Breast epithelium (tissue), 4 donors: ENCODE measurements at regions of chr17 and their contacts with region 1.

Region 1: GRCh38 chr17:39508987-39509386 is 47.7 kb downstream of the CDK12 start:
- DNase-seq: no peak
- H3K4me3 ChIP-seq: no peak overlapping the region
- H3K27ac ChIP-seq: no peak overlapping the region
- H3K4me1 ChIP-seq: no peaks in the 10 kb centered on the region
- H3K27me3 ChIP-seq: no peaks in the 10 kb centered on the region
- CTCF ChIP-seq: no peak
- POLR2A ChIP-seq: no peak

Region 2: GRCh38 chr17:39547713-39548478 is 38.9 kb after region 1 on chr17:
- intact Hi-C with region 1: loop called (anchors 2 kb)
- DNase-seq: peak; percentile 50 to 75
- H3K4me3 ChIP-seq: no peak overlapping the region
- H3K27ac ChIP-seq: no peak overlapping the region
- H3K4me1 ChIP-seq: no peaks in the 10 kb centered on the region
- H3K27me3 ChIP-seq: no peaks in the 10 kb centered on the region
- CTCF ChIP-seq: peak; percentile 76 to 95 (median 93)
- POLR2A ChIP-seq: no peak

Region 3: DNA sequence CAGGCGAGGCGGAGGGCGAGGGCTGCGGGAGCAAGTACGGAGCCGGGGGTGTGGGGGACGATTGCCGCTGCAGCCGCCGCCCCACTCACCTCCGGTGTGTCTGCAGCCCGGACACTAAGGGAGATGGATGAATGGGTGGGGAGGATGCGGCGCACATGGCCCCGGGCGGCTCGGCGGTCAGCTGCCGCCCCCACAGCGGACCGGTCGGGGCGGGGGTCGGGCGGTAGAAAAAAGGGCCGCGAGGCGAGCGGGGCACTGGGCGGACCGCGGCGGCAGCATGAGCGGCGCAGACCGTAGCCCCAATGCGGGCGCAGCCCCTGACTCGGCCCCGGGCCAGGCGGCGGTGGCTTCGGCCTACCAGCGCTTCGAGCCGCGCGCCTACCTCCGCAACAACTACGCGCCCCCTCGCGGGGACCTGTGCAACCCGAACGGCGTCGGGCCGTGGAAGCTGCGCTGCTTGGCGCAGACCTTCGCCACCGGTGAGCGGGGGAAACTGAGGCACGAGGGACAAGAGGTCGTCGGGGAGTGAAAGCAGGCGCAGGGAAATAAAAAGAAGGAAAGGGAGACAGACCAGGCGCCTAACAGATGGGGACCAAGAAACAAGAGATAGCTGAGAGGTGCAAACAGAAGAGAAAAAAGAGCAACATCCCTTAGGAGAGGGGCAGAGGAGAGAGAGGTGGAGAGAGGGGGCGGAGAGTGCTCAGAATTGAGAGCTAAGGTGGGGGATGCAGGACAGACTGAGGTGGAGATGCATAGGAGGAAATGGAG is 159.4 kb after region 1 on chr17 and contains the start of gene PNMT:
- intact Hi-C with region 1: no loop called
- DNase-seq: peak in 1 of 2 donors; percentile 60
- H3K4me3 ChIP-seq: peak within 1 kb of the TSS; percentile 30 to 68 (median 44)
- H3K27ac ChIP-seq: peak within 1 kb of the TSS; percentile 68 to 76
- H3K4me1 ChIP-seq: peaks cover 16 to 27% of the 10 kb centered on the region in 2 donors
- H3K27me3 ChIP-seq: peaks cover 3 to 12% of the 10 kb centered on the region in 2 donors
- CTCF ChIP-seq: peak; percentile 52 to 74 (median 57)
- POLR2A ChIP-seq: no peak
- total RNA-seq, gene PNMT: 1.6 to 9.5 (median 5.1) TPM

Region 4: DNA sequence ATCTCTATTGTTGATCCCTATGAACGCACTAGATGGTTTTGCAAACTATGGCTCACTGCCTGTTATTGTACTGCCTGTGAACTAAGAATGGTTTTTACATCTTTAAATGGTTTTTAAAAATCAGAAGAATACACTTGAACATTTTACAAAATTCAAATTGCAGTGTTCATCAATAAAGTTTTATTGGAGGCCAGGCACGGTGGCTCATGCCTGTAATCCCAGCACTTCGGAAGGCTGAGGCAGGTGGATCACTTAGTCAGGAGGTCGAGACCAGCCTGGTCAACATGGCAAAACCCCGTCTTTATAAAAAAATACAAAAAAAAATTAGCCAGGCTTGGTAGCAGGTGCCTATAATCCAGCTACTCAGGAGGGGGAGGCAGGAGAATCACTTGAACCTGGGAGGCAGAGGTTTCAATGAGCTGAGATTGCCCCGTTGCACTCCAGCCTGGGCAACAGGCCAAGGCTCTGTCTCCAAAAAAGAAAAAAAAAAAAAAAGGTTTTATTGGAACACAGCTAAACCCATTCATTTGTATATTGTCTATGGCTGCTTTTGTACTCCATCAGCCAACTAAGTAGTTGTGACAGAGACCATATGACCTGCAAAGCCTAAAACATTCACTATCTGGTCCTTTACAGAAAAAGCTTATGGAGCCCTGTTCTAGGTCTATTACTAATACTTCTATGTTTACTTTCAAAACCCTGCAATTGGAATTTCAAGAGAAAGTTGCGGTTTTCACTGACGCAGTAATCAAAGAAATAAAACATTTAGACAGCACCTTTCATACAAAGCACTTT is 336.3 kb after region 1 on chr17:
- intact Hi-C with region 1: no loop called
- DNase-seq: no peak
- H3K4me3 ChIP-seq: no peak overlapping the region
- H3K27ac ChIP-seq: no peak overlapping the region
- H3K4me1 ChIP-seq: no peaks in the 10 kb centered on the region
- H3K27me3 ChIP-seq: no peaks in the 10 kb centered on the region
- CTCF ChIP-seq: no peak
- POLR2A ChIP-seq: no peak